ENCODE measurements at regions of chr17 and their contacts with region 1.

Region 1: GRCh38 chr17:64025732-64026294 is 5.4 kb upstream of the ICAM2 start:
- DNase-seq: peak; percentile 94
- ATAC-seq: peak; percentile 90
- H3K4me3 ChIP-seq: peak overlapping the region in 4 of 5 experiments; percentile 4 to 47 (median 22)
- H3K4me3 Mint-ChIP-seq: peak overlapping the region; percentile 80
- H3K27ac ChIP-seq: peak overlapping the region; percentile 52 to 67
- H3K27ac Mint-ChIP-seq: peak overlapping the region; percentile 57
- H3K4me1 ChIP-seq: peaks cover 26 to 30% of the 10 kb centered on the region in 2 donors
- H3K4me1 Mint-ChIP-seq: peaks cover 37% of the 10 kb centered on the region
- H3K27me3 ChIP-seq: no peaks in the 10 kb centered on the region
- H3K27me3 Mint-ChIP-seq: no peaks in the 10 kb centered on the region
- CTCF ChIP-seq: peak; percentile 94

Region 2: GRCh38 chr17:63356337-63356757 is 669.5 kb before region 1 on chr17:
- CTCF ChIA-PET with region 1: no interaction called
- POLR2A ChIA-PET with region 1: no interaction called
- intact Hi-C with region 1: no loop called
- DNase-seq: no peak
- ATAC-seq: no peak
- H3K4me3 ChIP-seq: no peak overlapping the region
- H3K4me3 Mint-ChIP-seq: no peak overlapping the region
- H3K27ac ChIP-seq: no peak overlapping the region
- H3K27ac Mint-ChIP-seq: no peak overlapping the region
- H3K4me1 ChIP-seq: no peaks in the 10 kb centered on the region
- H3K4me1 Mint-ChIP-seq: no peaks in the 10 kb centered on the region
- H3K27me3 ChIP-seq: no peaks in the 10 kb centered on the region
- H3K27me3 Mint-ChIP-seq: no peaks in the 10 kb centered on the region
- CTCF ChIP-seq: no peak

Region 3: DNA sequence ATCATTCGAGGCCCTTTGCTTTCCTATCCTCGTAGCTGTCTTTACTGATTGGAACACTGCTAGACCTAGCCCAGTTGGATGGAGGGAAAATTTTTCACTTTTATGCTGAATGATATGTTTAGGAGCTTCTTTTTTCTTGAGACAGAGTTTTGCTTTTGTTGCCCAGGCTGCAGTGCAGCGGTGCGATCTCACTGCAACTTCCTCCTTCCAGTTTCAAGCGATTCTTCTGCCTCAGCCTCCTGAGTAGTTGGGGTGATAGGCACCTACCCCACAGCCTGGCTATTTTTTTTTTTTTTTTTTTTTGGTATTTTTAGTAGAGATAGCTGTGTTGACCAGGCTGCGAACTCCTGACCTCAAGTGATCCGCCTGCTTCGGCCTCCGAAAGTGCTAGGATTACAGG is 215.8 kb before region 1 on chr17:
- CTCF ChIA-PET with region 1: no interaction called
- POLR2A ChIA-PET with region 1: no interaction called
- intact Hi-C with region 1: no loop called
- DNase-seq: peak; percentile 43
- ATAC-seq: peak; percentile 54
- H3K4me3 ChIP-seq: no peak overlapping the region
- H3K4me3 Mint-ChIP-seq: no peak overlapping the region
- H3K27ac ChIP-seq: peak overlapping the region in 1 of 2 donors; percentile 54
- H3K27ac Mint-ChIP-seq: peak overlapping the region; percentile 75
- H3K4me1 ChIP-seq: peaks cover 9 to 10% of the 10 kb centered on the region in 2 donors
- H3K4me1 Mint-ChIP-seq: peaks cover 11% of the 10 kb centered on the region
- H3K27me3 ChIP-seq: no peaks in the 10 kb centered on the region
- H3K27me3 Mint-ChIP-seq: no peaks in the 10 kb centered on the region
- CTCF ChIP-seq: no peak

Region 4: DNA sequence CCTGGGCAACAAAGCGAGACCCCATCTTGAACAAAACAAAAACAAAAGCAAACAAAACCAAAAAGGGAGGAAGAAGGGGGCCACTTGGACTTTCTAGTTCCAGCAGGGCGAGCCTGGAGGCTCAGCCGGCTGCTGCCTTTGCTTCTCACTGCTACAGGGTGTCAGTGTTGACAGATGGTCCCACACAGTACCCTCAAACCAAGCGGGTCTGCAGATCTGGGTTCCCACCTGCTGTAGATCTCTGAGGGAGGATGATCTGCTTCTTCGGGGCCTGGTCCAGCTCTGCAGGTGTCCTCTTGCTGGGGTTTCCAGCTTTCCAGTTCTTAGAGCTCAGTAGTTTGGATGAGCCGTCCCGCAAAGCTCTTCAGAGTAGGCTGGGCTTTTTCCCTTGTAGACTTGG is 121.5 kb before region 1 on chr17:
- CTCF ChIA-PET with region 1: interaction called, 164 read pairs
- POLR2A ChIA-PET with region 1: interaction called, 5 read pairs
- intact Hi-C with region 1: no loop called
- DNase-seq: no peak
- ATAC-seq: no peak
- H3K4me3 ChIP-seq: no peak overlapping the region
- H3K4me3 Mint-ChIP-seq: no peak overlapping the region
- H3K27ac ChIP-seq: no peak overlapping the region
- H3K27ac Mint-ChIP-seq: no peak overlapping the region
- H3K4me1 ChIP-seq: no peaks in the 10 kb centered on the region
- H3K4me1 Mint-ChIP-seq: peaks cover 4% of the 10 kb centered on the region
- H3K27me3 ChIP-seq: no peaks in the 10 kb centered on the region
- H3K27me3 Mint-ChIP-seq: peaks cover 8% of the 10 kb centered on the region
- CTCF ChIP-seq: no peak

Region 5: GRCh38 chr17:63946440-63947367 is 79.1 kb before region 1 on chr17:
- CTCF ChIA-PET with region 1: interaction called, 214 read pairs
- POLR2A ChIA-PET with region 1: interaction called, 45 read pairs
- intact Hi-C with region 1: no loop called
- DNase-seq: peak; percentile 87
- ATAC-seq: peak; percentile 70
- H3K4me3 ChIP-seq: peak overlapping the region; percentile 20 to 59 (median 41)
- H3K4me3 Mint-ChIP-seq: peak overlapping the region; percentile 89
- H3K27ac ChIP-seq: peak overlapping the region; percentile 72 to 84
- H3K27ac Mint-ChIP-seq: peak overlapping the region; percentile 99
- H3K4me1 ChIP-seq: peaks cover 35 to 70% of the 10 kb centered on the region in 2 donors
- H3K4me1 Mint-ChIP-seq: peaks cover 46% of the 10 kb centered on the region
- H3K27me3 ChIP-seq: no peaks in the 10 kb centered on the region
- H3K27me3 Mint-ChIP-seq: no peaks in the 10 kb centered on the region
- CTCF ChIP-seq: peak; percentile 92

Region 6: DNA sequence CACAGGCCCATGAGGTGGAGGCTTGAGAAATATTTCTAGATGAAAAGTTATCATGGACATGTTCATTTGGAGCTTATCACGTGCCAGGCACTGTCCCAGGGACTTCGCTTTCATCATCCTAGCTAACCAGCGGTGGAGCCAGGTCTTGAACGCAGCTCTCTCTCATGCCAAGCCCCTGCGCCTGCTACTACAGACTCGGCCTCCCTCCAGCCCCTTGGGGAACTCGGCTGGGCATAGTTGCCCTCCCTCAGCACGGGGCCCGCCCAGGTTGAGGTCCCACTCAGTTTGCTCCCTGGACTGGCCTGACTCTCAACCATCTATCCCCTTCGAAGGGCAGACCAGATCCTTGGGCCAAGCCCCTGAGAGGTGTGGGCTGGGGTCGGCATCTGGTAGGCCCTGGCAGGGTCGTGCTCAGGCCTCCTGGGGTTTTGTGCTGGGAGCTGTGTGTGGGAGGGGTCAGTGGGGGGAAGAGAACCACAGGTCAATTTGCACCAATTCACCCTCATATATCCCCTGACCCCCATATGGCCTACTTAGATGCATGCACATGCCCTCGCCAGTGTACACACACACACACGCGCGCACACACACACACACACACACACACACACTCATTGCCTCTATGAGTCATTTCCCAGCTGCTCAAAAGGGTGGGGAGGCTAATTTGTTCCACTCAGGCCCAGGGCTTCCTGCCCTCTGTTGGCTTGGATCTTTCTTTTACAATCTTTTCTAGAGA is 41.0 kb before region 1 on chr17:
- CTCF ChIA-PET with region 1: interaction called, 58 read pairs
- POLR2A ChIA-PET with region 1: no interaction called
- intact Hi-C with region 1: loop called (anchors 1 kb)
- DNase-seq: no peak
- ATAC-seq: peak; percentile 80
- H3K4me3 ChIP-seq: no peak overlapping the region
- H3K4me3 Mint-ChIP-seq: no peak overlapping the region
- H3K27ac ChIP-seq: no peak overlapping the region
- H3K27ac Mint-ChIP-seq: no peak overlapping the region
- H3K4me1 ChIP-seq: peaks cover 8 to 17% of the 10 kb centered on the region in 2 donors
- H3K4me1 Mint-ChIP-seq: peaks cover 19% of the 10 kb centered on the region
- H3K27me3 ChIP-seq: no peaks in the 10 kb centered on the region
- H3K27me3 Mint-ChIP-seq: no peaks in the 10 kb centered on the region
- CTCF ChIP-seq: no peak

Region 7: DNA sequence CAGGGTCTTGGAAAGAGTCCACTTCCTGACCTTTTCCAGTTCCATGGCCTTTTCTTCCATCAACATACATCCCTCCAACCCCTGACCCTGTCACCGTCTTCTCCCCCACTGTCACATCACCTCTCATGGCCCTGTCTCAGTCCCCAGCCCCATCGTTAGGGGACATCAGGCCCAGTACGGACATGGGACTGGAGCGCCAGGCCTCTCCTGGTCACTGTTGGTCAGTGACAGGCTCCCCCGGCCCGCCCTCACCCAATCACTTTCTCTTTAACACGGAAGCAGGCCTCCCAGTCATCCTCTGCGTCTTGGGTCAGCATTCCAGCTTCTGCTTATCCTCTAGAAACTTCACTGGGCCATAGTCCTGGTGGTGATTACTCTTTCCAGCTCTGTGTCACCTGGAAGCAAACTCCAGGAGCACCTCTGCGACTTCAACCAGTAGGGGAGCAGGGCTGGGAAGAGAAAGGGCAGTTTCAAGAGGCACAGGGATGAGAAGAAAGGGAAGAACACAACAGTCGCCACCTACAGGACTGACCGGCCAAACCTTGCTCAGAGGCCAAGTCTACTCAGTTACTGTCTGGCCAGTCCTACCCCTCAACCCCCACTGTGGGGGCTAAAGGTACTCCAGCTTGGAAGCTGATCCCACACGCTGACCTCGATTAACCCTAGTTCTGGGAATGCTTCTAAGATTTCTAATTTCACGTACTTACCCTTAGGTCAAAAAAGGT is 10.5 kb after region 1 on chr17:
- CTCF ChIA-PET with region 1: interaction called, 11 read pairs
- POLR2A ChIA-PET with region 1: no interaction called
- intact Hi-C with region 1: no loop called
- DNase-seq: no peak
- ATAC-seq: no peak
- H3K4me3 ChIP-seq: no peak overlapping the region
- H3K4me3 Mint-ChIP-seq: no peak overlapping the region
- H3K27ac ChIP-seq: no peak overlapping the region
- H3K27ac Mint-ChIP-seq: no peak overlapping the region
- H3K4me1 ChIP-seq: no peaks in the 10 kb centered on the region
- H3K4me1 Mint-ChIP-seq: no peaks in the 10 kb centered on the region
- H3K27me3 ChIP-seq: no peaks in the 10 kb centered on the region
- H3K27me3 Mint-ChIP-seq: no peaks in the 10 kb centered on the region
- CTCF ChIP-seq: no peak

Region 8: GRCh38 chr17:64117981-64118979 is 92.5 kb after region 1 on chr17:
- CTCF ChIA-PET with region 1: interaction called, 22 read pairs
- POLR2A ChIA-PET with region 1: no interaction called
- intact Hi-C with region 1: no loop called
- DNase-seq: no peak
- ATAC-seq: no peak
- H3K4me3 ChIP-seq: no peak overlapping the region
- H3K4me3 Mint-ChIP-seq: no peak overlapping the region
- H3K27ac ChIP-seq: no peak overlapping the region
- H3K27ac Mint-ChIP-seq: no peak overlapping the region
- H3K4me1 ChIP-seq: peaks cover 10 to 18% of the 10 kb centered on the region in 2 donors
- H3K4me1 Mint-ChIP-seq: peaks cover 14% of the 10 kb centered on the region
- H3K27me3 ChIP-seq: no peaks in the 10 kb centered on the region
- H3K27me3 Mint-ChIP-seq: no peaks in the 10 kb centered on the region
- CTCF ChIP-seq: no peak

Measured in B cell (primary cell).